ENCODE measurements at regions of chr4 and their contacts with region 1.

Region 1: GRCh38 chr4:133148690-133149363 is at the start of gene PCDH10:
- DNase-seq: peak; percentile 88 to 99
- H3K4me3 ChIP-seq: peak within 1 kb of the TSS; percentile 62 to 67 (median 64)
- H3K27ac ChIP-seq: no peak within 1 kb of the TSS
- H3K4me1 ChIP-seq: peaks cover 5 to 17% (median 15%) of the 10 kb centered on the region in 4 experiments
- H3K27me3 ChIP-seq: peaks cover 45 to 69% (median 63%) of the 10 kb centered on the region in 4 experiments; a peak in 6 of 7 replicates
- CTCF ChIP-seq: no peak
- EP300 ChIP-seq: no peak
- POLR2A ChIP-seq: peak in 1 of 2 experiments; percentile 88; a peak in 2 of 3 replicates
- RAD21 ChIP-seq: no peak
- total RNA-seq, gene PCDH10: 9.3 and 10.0 TPM in 2 replicates

Region 2: GRCh38 chr4:132669786-132670185 is 479.0 kb before region 1 on chr4:
- CTCF ChIA-PET with region 1: no interaction called
- POLR2A ChIA-PET with region 1: no interaction called
- DNase-seq: no peak
- H3K4me3 ChIP-seq: no peak overlapping the region
- H3K27ac ChIP-seq: no peak overlapping the region
- H3K4me1 ChIP-seq: no peaks in the 10 kb centered on the region
- H3K27me3 ChIP-seq: no peaks in the 10 kb centered on the region
- CTCF ChIP-seq: no peak
- EP300 ChIP-seq: no peak
- POLR2A ChIP-seq: no peak
- RAD21 ChIP-seq: no peak

Region 3: DNA sequence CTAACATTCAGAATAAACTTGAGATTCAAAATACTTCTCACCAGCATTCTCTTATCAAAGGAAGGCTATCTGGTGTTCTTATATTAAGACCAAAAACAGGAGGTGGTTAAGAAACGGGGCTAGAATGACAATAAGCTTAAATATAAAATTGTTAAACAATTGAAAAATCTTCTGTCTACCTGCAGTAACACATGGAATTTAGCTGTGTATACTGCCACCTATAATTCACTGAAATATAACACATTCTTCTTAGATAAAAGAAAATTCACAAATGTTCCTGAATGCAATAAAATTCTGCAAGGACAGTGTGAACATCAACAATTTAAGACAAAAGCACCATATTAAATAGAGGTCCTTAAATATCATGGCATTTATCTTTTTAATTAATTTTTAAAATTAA is 11.3 kb before region 1 on chr4:
- CTCF ChIA-PET with region 1: interaction called, 11 read pairs
- POLR2A ChIA-PET with region 1: interaction called, 7 read pairs
- DNase-seq: no peak
- H3K4me3 ChIP-seq: no peak overlapping the region
- H3K27ac ChIP-seq: no peak overlapping the region
- H3K4me1 ChIP-seq: 0 out of 7 replicates have a peak, but pooled peaks cover 0 to under 1% (median 0%) of the 10 kb centered on the region in 4 experiments
- H3K27me3 ChIP-seq: no peaks in the 10 kb centered on the region
- CTCF ChIP-seq: no peak
- EP300 ChIP-seq: no peak
- POLR2A ChIP-seq: no peak
- RAD21 ChIP-seq: no peak

Region 4: GRCh38 chr4:133233922-133234321 is 85.1 kb after region 1 on chr4:
- CTCF ChIA-PET with region 1: no interaction called
- POLR2A ChIA-PET with region 1: no interaction called
- DNase-seq: no peak
- H3K4me3 ChIP-seq: no peak overlapping the region
- H3K27ac ChIP-seq: no peak overlapping the region
- H3K4me1 ChIP-seq: no peaks in the 10 kb centered on the region
- H3K27me3 ChIP-seq: no peaks in the 10 kb centered on the region
- CTCF ChIP-seq: no peak
- EP300 ChIP-seq: no peak
- POLR2A ChIP-seq: no peak
- RAD21 ChIP-seq: no peak

Region 5: DNA sequence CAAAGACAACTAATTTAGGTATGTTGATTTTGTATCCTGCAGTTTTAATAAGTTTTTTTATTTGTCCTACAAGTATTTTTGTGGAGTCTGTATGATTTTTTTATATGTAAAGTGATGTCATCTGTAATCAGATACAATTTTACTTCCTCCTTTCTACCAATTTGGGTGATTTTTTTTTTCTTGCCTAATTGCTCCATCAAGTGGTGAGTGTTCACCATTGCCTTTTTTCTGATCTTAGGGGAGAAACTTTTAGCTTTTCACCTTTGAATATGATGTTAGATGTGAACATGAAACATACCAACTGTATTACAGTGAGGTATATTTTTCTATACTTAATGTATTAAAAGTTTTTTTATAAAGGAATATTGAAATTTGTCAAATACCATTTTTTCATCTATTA is 690.5 kb after region 1 on chr4:
- CTCF ChIA-PET with region 1: interaction called, 10 read pairs
- POLR2A ChIA-PET with region 1: no interaction called
- DNase-seq: no peak
- H3K4me3 ChIP-seq: no peak overlapping the region
- H3K27ac ChIP-seq: no peak overlapping the region
- H3K4me1 ChIP-seq: no peaks in the 10 kb centered on the region
- H3K27me3 ChIP-seq: no peaks in the 10 kb centered on the region
- CTCF ChIP-seq: peak in 1 of 3 experiments; percentile 2; a peak in 1 of 4 replicates
- EP300 ChIP-seq: no peak
- POLR2A ChIP-seq: no peak
- RAD21 ChIP-seq: peak; percentile 58 to 59; a peak in 3 of 4 replicates